HCT116 (cell line): ENCODE measurements at regions of chr11 and their contacts with region 1.

Region 1: DNA sequence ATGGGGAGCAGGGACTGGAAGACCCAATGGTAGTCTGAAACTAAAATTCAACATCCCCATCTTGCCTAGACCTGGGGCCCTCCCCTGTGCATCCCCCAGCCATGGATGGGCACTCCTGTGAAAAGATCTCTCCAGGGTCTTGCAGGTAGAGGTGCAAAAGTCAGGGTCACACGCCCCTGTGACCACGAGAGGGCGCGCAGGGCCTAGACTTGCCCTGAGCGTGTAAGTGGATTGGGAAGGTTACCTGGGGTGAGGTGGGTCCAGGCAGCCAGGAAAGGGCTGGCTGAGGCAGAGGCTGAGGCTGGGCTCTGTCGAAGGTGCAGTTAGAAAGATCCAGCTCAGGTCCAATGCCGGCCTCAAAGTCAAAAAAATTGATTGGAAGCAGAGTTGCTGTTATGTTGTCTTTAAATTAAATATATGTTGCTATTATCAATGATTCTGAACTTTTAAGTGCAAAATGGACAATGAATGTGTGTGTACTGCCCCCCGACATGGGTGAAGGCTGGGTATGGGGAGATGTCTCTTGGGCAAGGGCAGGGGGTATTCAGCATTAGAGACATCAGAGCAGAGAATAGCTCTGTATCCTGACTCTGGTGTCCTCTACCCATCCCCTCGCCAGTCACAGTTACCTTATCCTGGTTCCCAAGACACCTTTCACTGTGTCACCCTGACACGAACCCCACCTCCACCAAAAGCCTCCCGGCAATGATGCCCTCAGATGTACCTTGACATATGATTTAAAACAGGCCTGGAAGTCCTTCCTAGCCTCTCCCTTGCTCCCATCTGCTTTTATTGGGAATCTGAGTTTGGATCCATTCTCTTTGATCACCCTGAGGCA is 4.7 kb upstream of the POU2F3 start:
- DNase-seq: peak; percentile 64
- ATAC-seq: peak; percentile 92
- H3K4me3 ChIP-seq: no peak overlapping the region
- H3K27ac ChIP-seq: no peak overlapping the region
- H3K4me1 ChIP-seq: no peaks in the 10 kb centered on the region
- H3K27me3 ChIP-seq: no peaks in the 10 kb centered on the region; the same call in 1 of the 2 replicates
- CTCF ChIP-seq: peak; percentile 93 to 97 (median 93)
- POLR2A ChIP-seq: no peak
- RAD21 ChIP-seq: peak; percentile 98

Region 2: GRCh38 chr11:120248551-120249278 is 13.5 kb after region 1 on chr11:
- CTCF ChIA-PET with region 1: interaction called, 4 read pairs
- POLR2A ChIA-PET with region 1: interaction called, 11 read pairs
- RAD21 ChIA-PET with region 1: no interaction called
- intact Hi-C with region 1: no loop called
- DNase-seq: peak; percentile 56
- ATAC-seq: peak; percentile 55
- H3K4me3 ChIP-seq: peak overlapping the region in 1 of 2 experiments; percentile 22; a peak in 2 of 4 replicates
- H3K27ac ChIP-seq: no peak overlapping the region
- H3K4me1 ChIP-seq: peaks cover 12 to 22% of the 10 kb centered on the region in 2 experiments; a peak in 3 of 4 replicates
- H3K27me3 ChIP-seq: peaks cover 5% of the 10 kb centered on the region; the same call in 1 of the 2 replicates
- CTCF ChIP-seq: no peak
- POLR2A ChIP-seq: no peak
- RAD21 ChIP-seq: peak; percentile 15; the same call in 1 of the 2 replicates